Posterior cingulate gyrus (tissue), 11 donors: ENCODE measurements at regions of chr10 and their contacts with region 1.

Region 1: DNA sequence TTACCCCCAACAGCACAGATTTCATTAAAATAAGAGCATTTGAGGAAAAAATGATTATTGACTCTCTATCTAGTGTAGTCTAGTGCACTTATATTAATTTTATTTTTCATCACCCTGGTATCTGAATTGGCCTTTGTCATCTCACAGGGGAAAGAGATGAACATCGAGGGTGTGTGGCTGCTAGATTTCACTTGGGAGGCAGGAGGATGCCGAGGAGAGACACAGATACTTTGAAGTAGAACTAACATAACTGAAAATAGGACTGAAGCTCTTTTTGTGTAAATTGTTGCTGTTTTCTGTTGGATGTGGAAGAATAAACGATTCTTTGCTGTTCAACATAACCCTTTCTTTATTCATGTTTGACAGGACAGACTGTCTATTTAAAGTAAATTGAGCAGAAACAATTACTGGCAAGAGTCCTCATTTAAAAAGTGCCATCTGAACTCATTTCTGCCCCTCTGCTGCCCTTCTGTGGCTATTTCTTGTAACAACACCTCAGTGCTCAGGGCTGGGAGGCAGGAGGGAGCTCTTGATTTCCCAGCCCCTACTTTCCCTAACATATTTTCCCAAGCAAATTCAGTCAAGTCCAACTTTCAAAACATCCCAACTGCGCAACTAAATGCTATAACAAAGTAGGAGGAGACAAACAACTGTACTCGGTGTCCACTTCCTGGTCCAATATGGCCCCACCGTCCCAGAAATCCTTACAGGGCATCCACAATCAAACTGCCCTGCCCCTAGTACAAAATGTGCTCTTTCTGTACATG is 15.6 kb downstream of the LYZL1 start:
- DNase-seq: peak in 9 of 10 donors; percentile 37 to 92 (median 69)

Region 2: GRCh38 chr10:28628184-28628893 is 676.1 kb before region 1 on chr10:
- intact Hi-C with region 1: loop called (anchors 10 kb)
- DNase-seq: peak; percentile 50 to 96 (median 86)

Region 3: GRCh38 chr10:29239569-29240472 is 64.6 kb before region 1 on chr10:
- intact Hi-C with region 1: loop called (anchors 5 kb)
- DNase-seq: peak in 1 of 10 donors; percentile 30